PC-9 (cell line): ENCODE measurements at regions of chr2 and their contacts with region 1.

Region 1: DNA sequence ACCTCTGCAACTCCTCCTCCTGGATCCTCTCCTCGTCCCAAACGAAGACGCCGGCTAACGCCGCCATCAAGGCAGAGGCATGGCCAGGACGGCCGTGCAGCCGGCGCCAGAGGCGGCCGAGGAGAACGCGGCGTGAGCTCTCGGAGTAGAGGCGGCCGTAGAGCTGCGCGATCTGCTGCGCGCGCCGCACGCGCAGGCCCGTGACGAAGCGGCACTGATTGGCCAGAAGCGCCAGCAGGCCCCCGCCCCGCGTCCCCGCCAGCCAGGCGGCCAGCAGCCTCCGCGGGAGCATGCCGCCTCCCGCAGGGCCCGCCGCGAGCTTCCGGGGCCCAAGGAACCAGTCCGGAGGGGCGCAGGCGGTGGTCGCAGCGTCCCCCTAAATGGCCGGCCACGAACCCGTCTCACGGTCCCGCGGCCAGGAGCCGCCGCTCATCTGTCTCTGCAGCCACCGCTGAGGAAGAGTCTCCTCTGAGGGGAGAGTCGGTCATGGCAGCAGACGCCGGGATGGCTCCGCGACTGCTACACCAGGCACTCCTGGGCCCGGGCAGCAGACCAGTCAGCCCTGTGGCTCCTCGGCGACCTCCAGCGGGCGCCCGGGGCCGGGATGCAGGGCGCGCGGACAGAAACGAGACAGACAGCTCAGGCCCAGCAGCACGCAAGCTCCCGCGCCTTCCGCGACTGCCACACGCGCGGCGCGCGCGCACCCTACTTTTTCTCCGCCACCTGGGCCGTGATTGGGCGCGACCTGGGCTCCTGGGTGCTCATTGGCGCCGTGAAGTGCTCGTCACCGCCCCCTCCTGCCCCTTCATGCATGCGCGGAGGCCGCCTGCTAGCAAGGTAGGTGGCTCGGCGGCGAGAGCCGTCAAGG is at the start of gene STARD7:
- DNase-seq: peak; percentile 96 to 99
- H3K4me3 ChIP-seq: peak within 1 kb of the TSS; percentile 87
- H3K27ac ChIP-seq: peak within 1 kb of the TSS; percentile 72
- H3K4me1 ChIP-seq: peaks cover 36% of the 10 kb centered on the region
- H3K27me3 ChIP-seq: no peaks in the 10 kb centered on the region
- CTCF ChIP-seq: peak; percentile 47; the same call in 1 of the 2 replicates
- total RNA-seq, gene STARD7: 171 and 189 TPM in 2 replicates

Region 2: GRCh38 chr2:96145036-96145847 is 63.1 kb before region 1 on chr2 and contains the start of gene DUSP2:
- CTCF ChIA-PET with region 1: no interaction called
- POLR2A ChIA-PET with region 1: interaction called, 9 read pairs
- intact Hi-C with region 1: loop called (anchors 2 kb)
- DNase-seq: peak; percentile 57 to 82
- H3K4me3 ChIP-seq: peak within 1 kb of the TSS; percentile 73
- H3K27ac ChIP-seq: no peak within 1 kb of the TSS
- H3K4me1 ChIP-seq: peaks cover 13% of the 10 kb centered on the region
- H3K27me3 ChIP-seq: no peaks in the 10 kb centered on the region
- CTCF ChIP-seq: no peak; the same call in 1 of the 2 replicates
- total RNA-seq, gene DUSP2: 4.0 and 5.2 TPM in 2 replicates

Region 3: DNA sequence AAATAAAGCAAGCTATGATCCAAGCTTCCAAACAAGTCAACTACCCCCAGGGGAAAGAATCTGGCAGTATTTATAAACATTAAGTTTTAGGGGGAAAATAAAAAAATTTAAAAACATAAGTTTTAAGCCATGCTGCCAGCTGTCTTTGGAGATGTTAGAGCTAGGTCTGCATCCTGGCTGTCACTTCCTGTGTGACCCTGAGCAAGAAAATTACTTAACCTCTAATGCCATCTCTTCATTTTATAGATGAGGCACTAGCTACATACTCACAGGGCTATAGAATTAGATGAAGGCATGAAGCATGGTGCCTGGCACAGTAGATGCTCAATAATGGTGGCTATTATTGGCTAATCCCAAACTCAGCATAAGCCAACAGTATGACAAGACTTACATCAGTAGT is 27.9 kb before region 1 on chr2:
- CTCF ChIA-PET with region 1: interaction called, 3 read pairs
- POLR2A ChIA-PET with region 1: interaction called, 11 read pairs
- intact Hi-C with region 1: no loop called
- DNase-seq: no peak
- H3K4me3 ChIP-seq: no peak overlapping the region
- H3K27ac ChIP-seq: no peak overlapping the region
- H3K4me1 ChIP-seq: no peaks in the 10 kb centered on the region
- H3K27me3 ChIP-seq: no peaks in the 10 kb centered on the region
- CTCF ChIP-seq: no peak

Region 4: GRCh38 chr2:96260404-96261260 is 52.3 kb after region 1 on chr2:
- CTCF ChIA-PET with region 1: interaction called, 4 read pairs
- POLR2A ChIA-PET with region 1: no interaction called
- intact Hi-C with region 1: loop called (anchors 1 kb)
- DNase-seq: peak; percentile 87 to 97
- H3K4me3 ChIP-seq: peak overlapping the region; percentile 24; the same call in 1 of the 2 replicates
- H3K27ac ChIP-seq: peak overlapping the region; percentile 70
- H3K4me1 ChIP-seq: peaks cover 56% of the 10 kb centered on the region
- H3K27me3 ChIP-seq: no peaks in the 10 kb centered on the region
- CTCF ChIP-seq: peak; percentile 68; the same call in 1 of the 2 replicates

Region 5: GRCh38 chr2:96565111-96565510 is 356.7 kb after region 1 on chr2:
- CTCF ChIA-PET with region 1: no interaction called
- POLR2A ChIA-PET with region 1: no interaction called
- intact Hi-C with region 1: no loop called
- DNase-seq: no peak
- H3K4me3 ChIP-seq: no peak overlapping the region
- H3K27ac ChIP-seq: no peak overlapping the region
- H3K4me1 ChIP-seq: no peaks in the 10 kb centered on the region
- H3K27me3 ChIP-seq: no peaks in the 10 kb centered on the region
- CTCF ChIP-seq: no peak